Gastrocnemius medialis (tissue), 4 donors: ENCODE measurements at regions of chr3 and their contacts with region 1.

Region 1: DNA sequence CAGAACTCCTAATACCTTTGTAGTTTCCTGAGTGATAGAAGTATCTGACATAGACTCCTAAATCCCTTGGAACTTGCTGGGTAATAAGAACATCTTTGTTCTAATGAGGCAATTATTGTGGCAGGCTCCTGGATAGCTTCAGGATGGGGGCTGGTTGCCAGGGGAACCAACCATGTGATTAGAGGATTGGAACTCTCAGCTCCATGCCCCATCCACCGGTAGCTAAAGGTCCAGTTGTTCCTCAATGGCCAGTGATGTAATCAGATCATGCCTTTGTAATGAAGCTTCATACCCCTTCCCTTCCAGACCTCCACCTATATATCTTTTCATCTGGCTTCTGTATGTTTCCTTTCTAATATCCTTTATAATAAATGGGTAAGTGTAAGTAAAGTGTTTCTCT is 221.2 kb upstream of the ALCAM start:
- DNase-seq: no peak
- ATAC-seq: no peak
- H3K4me3 ChIP-seq: no peak overlapping the region
- H3K27ac ChIP-seq: no peak overlapping the region
- H3K4me1 ChIP-seq: no peaks in the 10 kb centered on the region
- H3K27me3 ChIP-seq: no peaks in the 10 kb centered on the region
- CTCF ChIP-seq: no peak
- POLR2A ChIP-seq: no peak

Region 2: DNA sequence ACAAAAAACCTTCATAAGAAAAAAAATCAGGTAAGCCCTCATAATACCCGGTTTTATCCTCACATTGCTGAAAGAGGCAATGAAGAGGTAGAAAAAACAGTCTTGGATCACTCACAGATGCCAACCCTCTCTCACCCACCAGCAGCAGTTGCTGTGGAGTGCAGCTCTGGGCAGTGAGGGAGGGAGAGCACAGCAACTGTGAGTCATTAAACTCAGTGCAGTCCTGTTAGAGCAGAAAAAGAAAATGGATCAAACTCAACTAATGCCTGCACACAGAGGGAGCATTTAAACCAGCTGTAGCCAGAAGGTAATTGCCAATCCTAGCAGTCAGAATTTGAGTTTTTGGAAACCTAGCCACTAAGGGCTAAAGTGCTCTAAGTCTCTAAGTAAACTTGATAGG is 829.4 kb before region 1 on chr3:
- in situ Hi-C with region 1: no loop called
- intact Hi-C with region 1: no loop called
- DNase-seq: no peak
- ATAC-seq: no peak
- H3K4me3 ChIP-seq: no peak overlapping the region
- H3K27ac ChIP-seq: no peak overlapping the region
- H3K4me1 ChIP-seq: no peaks in the 10 kb centered on the region
- H3K27me3 ChIP-seq: no peaks in the 10 kb centered on the region
- CTCF ChIP-seq: no peak
- POLR2A ChIP-seq: no peak

Region 3: GRCh38 chr3:104723000-104723399 is 422.5 kb before region 1 on chr3:
- in situ Hi-C with region 1: no loop called
- intact Hi-C with region 1: no loop called
- DNase-seq: no peak
- ATAC-seq: no peak
- H3K4me3 ChIP-seq: no peak overlapping the region
- H3K27ac ChIP-seq: no peak overlapping the region
- H3K4me1 ChIP-seq: no peaks in the 10 kb centered on the region
- H3K27me3 ChIP-seq: no peaks in the 10 kb centered on the region
- CTCF ChIP-seq: no peak
- POLR2A ChIP-seq: no peak

Region 4: GRCh38 chr3:105077060-105077822 is 68.3 kb before region 1 on chr3:
- in situ Hi-C with region 1: no loop called
- intact Hi-C with region 1: no loop called
- DNase-seq: no peak
- ATAC-seq: no peak
- H3K4me3 ChIP-seq: no peak overlapping the region
- H3K27ac ChIP-seq: no peak overlapping the region
- H3K4me1 ChIP-seq: no peaks in the 10 kb centered on the region
- H3K27me3 ChIP-seq: no peaks in the 10 kb centered on the region
- CTCF ChIP-seq: no peak
- POLR2A ChIP-seq: no peak

Region 5: GRCh38 chr3:105212237-105212636 is 66.7 kb after region 1 on chr3:
- in situ Hi-C with region 1: no loop called
- intact Hi-C with region 1: loop called (anchors 2 kb)
- DNase-seq: no peak
- ATAC-seq: no peak
- H3K4me3 ChIP-seq: no peak overlapping the region
- H3K27ac ChIP-seq: no peak overlapping the region
- H3K4me1 ChIP-seq: no peaks in the 10 kb centered on the region
- H3K27me3 ChIP-seq: no peaks in the 10 kb centered on the region
- CTCF ChIP-seq: no peak
- POLR2A ChIP-seq: no peak